Ascending aorta (tissue), 2 donors: ENCODE measurements at regions of chr1 and their contacts with region 1.

Region 1: DNA sequence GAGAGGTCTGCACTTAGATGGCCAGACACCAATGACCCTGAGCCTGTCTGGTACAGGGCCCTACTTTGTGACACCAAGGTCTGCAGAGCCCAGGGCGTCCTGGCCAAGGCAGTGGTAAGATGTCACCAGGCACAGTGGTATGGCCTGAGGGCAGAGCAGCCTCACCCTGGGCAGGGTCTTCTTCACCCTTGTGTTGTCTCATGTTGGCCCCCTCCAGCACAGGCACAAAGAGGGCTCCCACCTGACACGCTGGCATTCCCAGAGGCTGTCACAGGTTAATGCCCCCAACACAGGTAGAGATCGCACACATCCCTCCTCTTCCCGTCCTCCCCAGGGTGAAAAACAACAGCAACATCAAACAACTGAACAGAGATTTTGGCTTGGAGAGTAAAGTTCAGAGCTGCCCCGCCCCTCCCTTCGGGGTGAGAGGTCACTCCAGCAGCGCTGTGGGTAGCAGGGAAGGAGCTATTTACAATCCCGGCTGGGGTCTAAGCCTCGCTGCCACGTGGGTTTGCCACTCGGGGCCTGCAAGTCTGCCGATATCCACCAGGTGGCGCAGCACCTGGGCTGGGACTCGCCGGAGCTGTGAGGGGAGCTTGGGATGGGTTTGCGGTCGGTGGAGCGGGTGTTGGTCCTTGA is 12.6 kb downstream of the EFNA3 start:
- DNase-seq: peak in 1 of 2 donors; percentile 86
- H3K4me3 ChIP-seq: no peak overlapping the region
- H3K27ac ChIP-seq: no peak overlapping the region
- H3K4me1 ChIP-seq: peaks cover 0 to 6% of the 10 kb centered on the region in 2 donors
- H3K27me3 ChIP-seq: no peaks in the 10 kb centered on the region
- CTCF ChIP-seq: peak; percentile 93 to 99 (median 98)

Region 2: GRCh38 chr1:155127105-155127964 is 36.1 kb after region 1 on chr1 and contains the start of gene EFNA1:
- intact Hi-C with region 1: loop called (anchors 2 kb)
- DNase-seq: peak in 1 of 2 donors; percentile 78
- H3K4me3 ChIP-seq: peak within 1 kb of the TSS; percentile 63 to 70
- H3K27ac ChIP-seq: no peak within 1 kb of the TSS
- H3K4me1 ChIP-seq: peaks cover 20 to 30% of the 10 kb centered on the region in 2 donors
- H3K27me3 ChIP-seq: peaks cover 9% of the 10 kb centered on the region
- CTCF ChIP-seq: no peak
- total RNA-seq, gene EFNA1: 66.7 TPM

Region 3: DNA sequence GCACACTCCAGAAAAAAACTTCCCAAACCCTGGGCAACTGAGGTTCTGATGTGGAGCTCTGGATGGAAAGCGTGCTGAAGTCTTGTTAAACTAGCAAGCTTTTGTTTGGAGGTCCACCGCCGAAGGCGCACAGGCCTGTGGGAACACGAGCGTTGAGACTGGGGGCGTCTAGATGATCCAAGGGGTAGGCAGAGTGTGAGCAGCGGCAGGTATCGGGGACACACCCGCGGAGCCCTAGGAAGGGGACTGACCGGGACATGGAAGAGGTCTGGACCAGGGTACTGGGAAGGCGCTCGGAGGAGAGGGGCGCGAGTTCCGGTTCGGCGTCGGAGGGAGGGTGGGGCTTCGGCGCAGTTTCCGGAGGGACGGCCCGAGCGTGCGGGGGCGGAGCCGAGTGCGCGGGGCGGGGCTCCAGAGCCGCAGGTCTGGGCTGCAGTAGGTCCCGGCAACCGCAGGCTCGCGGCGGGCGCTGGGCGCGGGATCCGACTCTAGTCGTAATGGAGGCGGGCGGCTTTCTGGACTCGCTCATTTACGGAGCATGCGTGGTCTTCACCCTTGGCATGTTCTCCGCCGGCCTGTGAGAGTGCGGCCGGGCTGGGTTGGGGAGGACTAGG is 44.3 kb after region 1 on chr1 and contains the start of gene SLC50A1:
- intact Hi-C with region 1: loop called (anchors 2 kb)
- DNase-seq: peak; percentile 78 to 98
- H3K4me3 ChIP-seq: peak within 1 kb of the TSS; percentile 76 to 80
- H3K27ac ChIP-seq: peak within 1 kb of the TSS; percentile 97 to 100
- H3K4me1 ChIP-seq: peaks cover 9 to 25% of the 10 kb centered on the region in 2 donors
- H3K27me3 ChIP-seq: no peaks in the 10 kb centered on the region
- CTCF ChIP-seq: peak; percentile 26 to 72 (median 39)
- total RNA-seq, gene SLC50A1: 9.4 TPM

Region 4: GRCh38 chr1:155167166-155168104 is 76.2 kb after region 1 on chr1:
- intact Hi-C with region 1: loop called (anchors 1 kb)
- DNase-seq: peak in 1 of 2 donors; percentile 90
- H3K4me3 ChIP-seq: peak overlapping the region in 1 of 2 donors; percentile 12
- H3K27ac ChIP-seq: no peak overlapping the region
- H3K4me1 ChIP-seq: peaks cover 3 to 8% of the 10 kb centered on the region in 2 donors
- H3K27me3 ChIP-seq: no peaks in the 10 kb centered on the region
- CTCF ChIP-seq: peak; percentile 86 to 89 (median 86)